A549 (cell line): ENCODE measurements at regions of chr17 and their contacts with region 1.

Region 1: GRCh38 chr17:81601525-81602120 is 35.3 kb downstream of the NPLOC4 start:
- DNase-seq: peak; percentile 75 to 80
- ATAC-seq: peak; percentile 95 to 97
- H3K4me3 ChIP-seq: no peak overlapping the region
- H3K27ac ChIP-seq: peak overlapping the region; percentile 5 to 63; a peak in 4 of 6 replicates
- H3K4me1 ChIP-seq: peaks cover 9% of the 10 kb centered on the region
- CTCF ChIP-seq: peak; percentile 95
- EP300 ChIP-seq: no peak
- POLR2A ChIP-seq: no peak
- RAD21 ChIP-seq: peak; percentile 94 to 98

Region 2: GRCh38 chr17:81512560-81513371 is 88.9 kb before region 1 on chr17 and contains the start of gene ACTG1:
- CTCF ChIA-PET with region 1: interaction called, 65 read pairs
- POLR2A ChIA-PET with region 1: interaction called, 3 read pairs
- DNase-seq: peak; percentile 92 to 95
- ATAC-seq: peak; percentile 30 to 31
- H3K4me3 ChIP-seq: peak within 1 kb of the TSS; percentile 83
- H3K27ac ChIP-seq: peak within 1 kb of the TSS; percentile 99
- H3K4me1 ChIP-seq: peaks cover 29% of the 10 kb centered on the region
- CTCF ChIP-seq: no peak
- EP300 ChIP-seq: no peak
- POLR2A ChIP-seq: peak; percentile 98
- RAD21 ChIP-seq: no peak
- polyA plus RNA-seq, gene ACTG1: 2,042 and 2,306 TPM in 2 replicates

Region 3: GRCh38 chr17:81527591-81528383 is 73.8 kb before region 1 on chr17 and contains the start of gene FSCN2:
- CTCF ChIA-PET with region 1: interaction called, 31 read pairs
- POLR2A ChIA-PET with region 1: no interaction called
- DNase-seq: no peak
- ATAC-seq: peak; percentile 21 to 43; a peak in 5 of 6 replicates
- H3K4me3 ChIP-seq: no peak within 1 kb of the TSS
- H3K27ac ChIP-seq: no peak within 1 kb of the TSS
- H3K4me1 ChIP-seq: no peaks in the 10 kb centered on the region
- CTCF ChIP-seq: no peak
- EP300 ChIP-seq: no peak
- POLR2A ChIP-seq: no peak
- RAD21 ChIP-seq: no peak
- polyA plus RNA-seq, gene FSCN2: 0.84 and 1.2 TPM in 2 replicates

Region 4: DNA sequence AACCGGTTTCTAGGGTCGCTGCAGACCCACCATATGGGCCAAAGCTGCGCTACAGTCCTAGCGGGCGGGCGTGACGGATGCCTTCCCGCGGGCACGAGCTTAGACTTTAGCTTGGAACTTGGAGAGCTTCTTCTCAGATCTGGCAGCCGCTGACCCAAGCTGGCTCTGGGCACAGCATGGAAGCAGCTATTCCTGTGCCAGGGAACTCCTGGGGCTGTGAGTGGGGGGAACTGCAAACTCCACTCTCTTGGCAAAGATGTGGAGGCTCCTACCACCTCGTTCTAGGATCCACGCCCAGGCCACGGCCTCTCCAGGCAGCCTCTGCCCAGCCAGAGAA is 58.3 kb before region 1 on chr17:
- CTCF ChIA-PET with region 1: interaction called, 51 read pairs
- POLR2A ChIA-PET with region 1: no interaction called
- DNase-seq: no peak
- ATAC-seq: no peak
- H3K4me3 ChIP-seq: no peak overlapping the region
- H3K27ac ChIP-seq: peak overlapping the region in 1 of 2 experiments; percentile 13; a peak in 1 of 6 replicates
- H3K4me1 ChIP-seq: no peaks in the 10 kb centered on the region
- CTCF ChIP-seq: no peak
- EP300 ChIP-seq: no peak
- POLR2A ChIP-seq: no peak
- RAD21 ChIP-seq: no peak

Region 5: GRCh38 chr17:81566461-81567126 is 35.0 kb before region 1 on chr17:
- CTCF ChIA-PET with region 1: interaction called, 1,604 read pairs
- POLR2A ChIA-PET with region 1: interaction called, 13 read pairs
- DNase-seq: peak; percentile 85 to 89
- ATAC-seq: peak; percentile 85 to 91
- H3K4me3 ChIP-seq: peak overlapping the region; percentile 29; the same call in 2 of the 3 replicates
- H3K27ac ChIP-seq: peak overlapping the region; percentile 88 to 91
- H3K4me1 ChIP-seq: peaks cover 70% of the 10 kb centered on the region
- CTCF ChIP-seq: no peak
- EP300 ChIP-seq: peak; percentile 49 to 87; a peak in 3 of 5 replicates
- POLR2A ChIP-seq: no peak
- RAD21 ChIP-seq: peak; percentile 32 to 44

Region 6: GRCh38 chr17:81631482-81631881 is 29.9 kb after region 1 on chr17:
- CTCF ChIA-PET with region 1: interaction called, 45 read pairs
- POLR2A ChIA-PET with region 1: no interaction called
- DNase-seq: no peak
- ATAC-seq: no peak
- H3K4me3 ChIP-seq: no peak overlapping the region
- H3K27ac ChIP-seq: no peak overlapping the region
- H3K4me1 ChIP-seq: peaks cover 15% of the 10 kb centered on the region
- CTCF ChIP-seq: no peak
- EP300 ChIP-seq: no peak
- POLR2A ChIP-seq: no peak
- RAD21 ChIP-seq: no peak

Region 7: GRCh38 chr17:81648013-81648706 is 46.5 kb after region 1 on chr17:
- CTCF ChIA-PET with region 1: interaction called, 11 read pairs
- POLR2A ChIA-PET with region 1: no interaction called
- DNase-seq: no peak
- ATAC-seq: no peak
- H3K4me3 ChIP-seq: no peak overlapping the region
- H3K27ac ChIP-seq: no peak overlapping the region
- H3K4me1 ChIP-seq: peaks cover 14% of the 10 kb centered on the region
- CTCF ChIP-seq: no peak
- EP300 ChIP-seq: no peak
- POLR2A ChIP-seq: no peak
- RAD21 ChIP-seq: no peak